Activated CD4-positive, alpha-beta T cell treated with anti-CD3 and anti-CD28 coated beads, Interleukin-2, amount 10 ng/mL, durations not matched to agents 24 days and 14 days (primary cell): ENCODE measurements at regions of chr21 and their contacts with region 1.

Region 1: DNA sequence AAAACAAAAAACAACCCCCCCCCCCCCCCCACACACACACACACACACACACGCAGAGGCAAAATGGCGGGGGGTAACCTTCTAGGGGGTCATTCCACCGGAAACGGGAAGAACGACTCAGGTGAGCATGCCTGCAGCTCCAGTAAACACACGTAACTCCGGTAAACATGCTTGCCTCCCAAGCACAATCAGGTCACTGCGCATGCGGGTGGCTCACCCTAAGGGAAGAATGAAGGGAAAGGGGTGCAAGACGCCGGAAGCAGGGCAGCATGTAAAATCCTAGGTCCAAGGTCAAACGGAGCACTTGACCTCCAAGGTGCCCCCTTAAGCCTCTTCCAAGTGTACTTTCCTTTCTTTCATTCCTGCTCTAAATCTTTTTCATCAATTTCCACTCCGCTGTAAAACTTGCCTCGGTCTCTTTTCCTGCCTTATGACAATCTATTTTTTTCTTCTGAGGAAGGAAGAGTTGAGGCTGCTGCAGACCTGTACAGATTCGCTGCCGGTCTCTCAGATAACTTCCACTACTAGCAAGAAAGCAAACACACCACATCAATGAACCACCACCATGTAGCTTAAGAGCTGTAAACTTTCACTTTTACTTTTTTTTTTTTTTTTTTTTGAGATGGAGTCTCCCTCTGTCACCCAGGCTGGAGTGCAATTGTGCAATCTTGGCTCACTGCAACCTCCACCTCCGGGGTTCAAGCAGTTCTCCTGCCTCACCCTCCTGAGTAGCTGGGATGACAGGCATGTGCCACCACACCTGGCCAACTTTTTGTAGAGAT is 21.0 kb upstream of the CBR3 start:
- DNase-seq: peak; percentile 85
- H3K4me3 Mint-ChIP-seq: peak overlapping the region; percentile 78
- H3K27ac Mint-ChIP-seq: peak overlapping the region; percentile 96
- H3K4me1 Mint-ChIP-seq: peaks cover 24% of the 10 kb centered on the region
- H3K27me3 Mint-ChIP-seq: peaks cover 6% of the 10 kb centered on the region

Region 2: DNA sequence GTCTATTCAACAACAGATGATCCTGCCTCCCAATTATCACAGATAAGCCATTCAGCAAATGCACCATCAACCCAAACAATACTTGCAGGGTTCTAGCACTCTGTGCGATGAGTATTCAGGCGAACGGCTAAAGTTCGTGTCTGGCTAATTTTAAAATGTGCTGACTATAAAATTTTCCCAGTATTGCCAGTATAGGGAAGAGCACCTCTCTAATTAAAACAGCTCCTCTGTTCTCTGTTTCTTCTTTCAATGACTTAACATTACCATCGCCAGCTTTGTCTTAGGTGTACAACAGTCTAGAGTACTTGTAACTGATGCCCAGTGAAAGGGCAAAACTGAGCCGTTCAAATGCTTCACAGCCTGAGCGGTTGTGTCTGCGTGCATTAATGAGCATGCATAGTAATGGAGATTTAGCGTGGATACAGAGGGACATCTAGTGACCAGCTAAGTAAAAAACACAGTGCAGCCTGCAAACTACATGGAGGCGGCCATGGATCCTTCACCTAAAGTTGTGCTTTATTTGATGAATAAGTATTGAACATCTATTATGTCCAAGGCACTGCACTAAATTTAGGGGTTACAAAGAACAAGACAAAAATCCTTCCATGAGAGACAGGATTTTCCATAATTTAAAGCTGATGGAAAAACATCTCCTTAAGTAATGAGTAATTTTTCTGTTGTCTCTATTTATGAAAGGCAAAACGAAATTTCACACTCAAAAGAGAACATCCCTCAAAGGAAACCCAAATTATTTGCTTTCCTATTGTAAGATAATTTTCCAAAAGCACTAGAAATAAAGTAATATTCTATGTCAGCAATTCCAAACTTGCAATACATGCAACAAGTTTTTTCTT is 173.5 kb before region 1 on chr21:
- intact Hi-C with region 1: loop called (anchors 10 kb)
- DNase-seq: no peak
- H3K4me3 Mint-ChIP-seq: no peak overlapping the region
- H3K27ac Mint-ChIP-seq: no peak overlapping the region
- H3K4me1 Mint-ChIP-seq: no peaks in the 10 kb centered on the region
- H3K27me3 Mint-ChIP-seq: peaks cover 8% of the 10 kb centered on the region

Region 3: GRCh38 chr21:36028127-36029069 is 85.4 kb before region 1 on chr21:
- intact Hi-C with region 1: loop called (anchors 1 kb)
- DNase-seq: peak; percentile 90
- H3K4me3 Mint-ChIP-seq: no peak overlapping the region
- H3K27ac Mint-ChIP-seq: no peak overlapping the region
- H3K4me1 Mint-ChIP-seq: peaks cover 6% of the 10 kb centered on the region
- H3K27me3 Mint-ChIP-seq: no peaks in the 10 kb centered on the region

Region 4: DNA sequence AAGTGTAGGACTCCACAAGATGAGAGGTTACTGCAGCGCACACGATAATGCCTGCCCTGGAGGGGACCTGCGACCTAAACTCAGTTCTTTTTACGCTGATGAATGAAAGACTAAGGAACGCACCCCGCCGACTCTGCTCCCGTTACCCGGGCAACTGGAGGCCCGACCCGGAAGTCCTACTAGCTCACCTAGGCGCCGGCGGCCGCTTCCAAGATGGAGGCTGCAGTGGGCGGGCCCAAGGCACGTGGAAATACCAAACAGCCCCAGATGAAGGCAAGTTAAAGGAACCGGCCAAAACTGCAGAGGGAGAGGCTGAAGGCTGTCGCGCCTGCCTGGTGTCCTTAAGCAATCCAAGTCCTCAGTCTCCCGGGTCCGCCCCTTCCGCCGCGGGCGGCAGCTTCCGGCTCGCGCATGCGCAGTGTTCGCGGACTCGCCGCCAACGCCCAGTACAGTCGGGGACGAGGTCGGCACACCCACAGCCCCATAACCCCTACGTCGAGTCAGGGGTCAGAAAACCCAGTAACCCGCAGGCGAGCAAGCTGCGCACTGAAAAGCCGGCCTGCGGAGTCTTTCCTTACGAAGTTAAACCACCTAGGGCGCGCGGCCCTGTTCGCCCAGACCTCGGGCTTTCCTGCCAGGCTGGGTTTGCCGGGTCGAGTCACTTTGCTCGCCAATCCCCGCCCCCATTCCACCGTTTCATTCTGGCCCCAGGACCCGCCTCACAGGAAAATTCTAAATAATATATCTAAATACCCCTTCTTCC is 53.5 kb before region 1 on chr21 and contains the start of gene SETD4:
- intact Hi-C with region 1: loop called (anchors 1 kb)
- DNase-seq: peak; percentile 98
- H3K4me3 Mint-ChIP-seq: peak within 1 kb of the TSS; percentile 94
- H3K27ac Mint-ChIP-seq: peak within 1 kb of the TSS; percentile 99
- H3K4me1 Mint-ChIP-seq: peaks cover 24% of the 10 kb centered on the region
- H3K27me3 Mint-ChIP-seq: peaks cover 1% of the 10 kb centered on the region
- total RNA-seq, gene SETD4: 23.2 and 23.8 TPM in 2 replicates

Region 5: GRCh38 chr21:36260030-36260787 is 146.4 kb after region 1 on chr21:
- intact Hi-C with region 1: no loop called
- DNase-seq: peak; percentile 90
- H3K4me3 Mint-ChIP-seq: peak overlapping the region; percentile 79
- H3K27ac Mint-ChIP-seq: peak overlapping the region; percentile 82
- H3K4me1 Mint-ChIP-seq: peaks cover 17% of the 10 kb centered on the region
- H3K27me3 Mint-ChIP-seq: no peaks in the 10 kb centered on the region